ENCODE measurements at regions of chr7 and their contacts with region 1.

Region 1: GRCh38 chr7:26782501-26782900 is 81.9 kb downstream of the SKAP2 start:
- DNase-seq: no peak
- H3K4me3 ChIP-seq: no peak overlapping the region
- H3K27ac ChIP-seq: no peak overlapping the region
- H3K4me1 ChIP-seq: no peaks in the 10 kb centered on the region
- H3K27me3 ChIP-seq: no peaks in the 10 kb centered on the region
- CTCF ChIP-seq: no peak
- POLR2A ChIP-seq: no peak

Region 2: GRCh38 chr7:27048438-27048837 is 265.9 kb after region 1 on chr7:
- intact Hi-C with region 1: no loop called
- DNase-seq: no peak
- H3K4me3 ChIP-seq: no peak overlapping the region
- H3K27ac ChIP-seq: no peak overlapping the region
- H3K4me1 ChIP-seq: no peaks in the 10 kb centered on the region
- H3K27me3 ChIP-seq: no peaks in the 10 kb centered on the region
- CTCF ChIP-seq: no peak
- POLR2A ChIP-seq: no peak

Region 3: DNA sequence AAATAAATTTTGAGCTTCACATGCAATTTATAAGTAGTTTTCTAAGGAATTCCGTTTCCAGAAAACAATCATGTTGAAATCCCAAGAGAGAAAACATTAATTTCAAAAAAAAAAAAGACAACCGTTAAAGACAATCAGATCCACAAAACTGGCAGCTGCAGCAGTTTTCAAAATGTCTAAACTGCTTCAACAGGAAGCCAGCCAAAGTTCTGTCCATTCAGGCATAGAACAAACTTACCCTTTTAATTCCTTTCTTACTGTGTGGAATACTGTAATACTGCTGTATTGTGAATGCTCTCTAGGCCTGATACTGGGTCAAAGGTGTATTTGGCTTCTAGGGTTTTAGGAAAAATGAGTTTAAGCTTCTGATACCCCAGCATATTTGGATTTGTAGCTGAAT is 281.7 kb after region 1 on chr7:
- intact Hi-C with region 1: loop called (anchors 5 kb)
- DNase-seq: no peak
- H3K4me3 ChIP-seq: no peak overlapping the region
- H3K27ac ChIP-seq: no peak overlapping the region
- H3K4me1 ChIP-seq: no peaks in the 10 kb centered on the region
- H3K27me3 ChIP-seq: no peaks in the 10 kb centered on the region
- CTCF ChIP-seq: no peak
- POLR2A ChIP-seq: no peak

Region 4: GRCh38 chr7:28280516-28280915 is 1498.0 kb after region 1 on chr7:
- intact Hi-C with region 1: no loop called
- DNase-seq: no peak
- H3K4me3 ChIP-seq: no peak overlapping the region
- H3K27ac ChIP-seq: no peak overlapping the region
- H3K4me1 ChIP-seq: no peaks in the 10 kb centered on the region
- H3K27me3 ChIP-seq: no peaks in the 10 kb centered on the region
- CTCF ChIP-seq: no peak
- POLR2A ChIP-seq: no peak

Measured in breast epithelium (tissue), 4 donors.